ENCODE measurements at regions of chr17 and their contacts with region 1.

Region 1: DNA sequence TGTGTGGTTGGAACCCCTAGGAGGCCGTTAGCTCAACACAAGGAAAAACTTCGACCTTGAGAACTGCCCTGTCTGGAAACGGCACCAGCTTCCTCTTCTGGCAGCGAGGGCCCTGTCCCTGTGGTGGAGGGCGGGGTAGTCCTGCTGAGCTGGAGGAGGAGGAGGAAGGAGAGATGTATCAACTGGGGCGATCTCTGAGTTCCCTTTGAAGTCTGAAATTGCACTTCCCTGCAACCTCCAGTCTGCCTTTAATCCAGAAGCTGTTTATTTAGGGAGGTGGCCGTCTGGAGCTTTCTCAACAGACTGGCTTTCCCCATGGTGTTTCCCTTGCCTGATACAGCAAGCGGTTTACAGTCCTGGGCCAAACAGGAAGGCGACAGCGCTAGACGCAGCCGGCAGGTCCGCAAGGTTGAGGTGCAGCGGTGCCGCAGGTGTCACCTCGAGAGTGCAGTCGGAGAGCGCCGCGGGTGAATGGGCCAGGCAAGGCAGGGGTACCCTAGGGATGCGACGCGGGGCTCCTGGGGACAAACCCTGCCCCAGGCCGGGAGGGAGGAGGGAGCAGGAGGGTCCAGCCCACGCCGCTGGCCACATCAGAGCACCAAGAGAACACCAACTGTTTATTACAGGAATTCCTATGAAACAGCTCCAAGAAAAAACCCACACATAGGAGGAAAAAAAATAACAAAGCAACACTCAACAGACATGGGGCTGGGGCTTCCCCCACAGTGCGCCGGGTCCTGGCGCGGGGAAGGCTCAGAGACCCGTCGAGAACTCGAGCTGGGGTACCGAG is 11.4 kb upstream of the MRPS23 start:
- DNase-seq: peak; percentile 78 to 90
- ATAC-seq: peak; percentile 37 to 64
- H3K4me3 ChIP-seq: peak overlapping the region; percentile 40
- H3K27ac ChIP-seq: peak overlapping the region; percentile 92 to 95
- H3K4me1 ChIP-seq: peaks cover 73% of the 10 kb centered on the region
- CTCF ChIP-seq: no peak
- EP300 ChIP-seq: peak; percentile 68 to 88; a peak in 4 of 5 replicates
- POLR2A ChIP-seq: peak; percentile 24; the same call in 1 of the 2 replicates
- RAD21 ChIP-seq: peak; percentile 20 to 34; a peak in 1 of 5 replicates

Region 2: GRCh38 chr17:57875309-57876115 is 14.3 kb after region 1 on chr17:
- CTCF ChIA-PET with region 1: interaction called, 499 read pairs
- POLR2A ChIA-PET with region 1: interaction called, 25 read pairs
- DNase-seq: peak; percentile 96 to 98
- ATAC-seq: peak; percentile 83 to 88
- H3K4me3 ChIP-seq: peak overlapping the region; percentile 7; the same call in 1 of the 3 replicates
- H3K27ac ChIP-seq: peak overlapping the region; percentile 92 to 95
- H3K4me1 ChIP-seq: peaks cover 95% of the 10 kb centered on the region
- CTCF ChIP-seq: peak; percentile 54; the same call in 2 of the 3 replicates
- EP300 ChIP-seq: peak; percentile 73 to 92; a peak in 3 of 5 replicates
- POLR2A ChIP-seq: no peak
- RAD21 ChIP-seq: peak; percentile 72 to 86

Region 3: DNA sequence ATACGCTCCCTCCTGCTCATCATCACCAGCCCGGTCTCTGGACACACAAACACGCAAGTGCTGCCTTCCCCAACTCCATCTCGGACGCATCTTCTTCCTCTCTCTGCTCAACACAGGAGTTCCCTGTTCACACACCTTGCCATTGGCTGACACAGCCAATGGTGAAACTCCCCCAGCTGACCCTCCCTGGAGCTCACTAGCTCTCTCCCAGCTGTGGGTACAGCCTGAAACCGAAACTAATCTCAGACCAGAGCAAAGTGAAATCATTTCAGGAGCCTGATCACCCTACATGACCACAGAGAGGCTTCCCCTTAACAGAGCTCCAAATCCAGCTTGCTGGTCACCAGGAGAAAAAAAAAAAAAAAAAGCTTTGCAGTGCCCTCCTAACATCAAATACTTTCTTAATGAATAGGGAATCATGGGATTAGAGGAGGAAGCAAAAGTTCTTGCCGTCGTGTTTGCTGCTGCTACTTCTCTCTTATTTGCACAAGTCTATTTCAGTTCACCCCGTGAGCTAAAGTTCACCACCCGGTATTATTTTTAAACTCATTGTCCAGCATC is 85.7 kb after region 1 on chr17:
- CTCF ChIA-PET with region 1: interaction called, 227 read pairs
- POLR2A ChIA-PET with region 1: interaction called, 10 read pairs
- DNase-seq: peak; percentile 66 to 83
- ATAC-seq: peak; percentile 20 to 22; a peak in 4 of 6 replicates
- H3K4me3 ChIP-seq: peak overlapping the region; percentile 34
- H3K27ac ChIP-seq: peak overlapping the region; percentile 93 to 100
- H3K4me1 ChIP-seq: peaks cover 91% of the 10 kb centered on the region
- CTCF ChIP-seq: no peak
- EP300 ChIP-seq: no peak
- POLR2A ChIP-seq: no peak
- RAD21 ChIP-seq: no peak; a peak in 1 of 5 replicates

Region 4: DNA sequence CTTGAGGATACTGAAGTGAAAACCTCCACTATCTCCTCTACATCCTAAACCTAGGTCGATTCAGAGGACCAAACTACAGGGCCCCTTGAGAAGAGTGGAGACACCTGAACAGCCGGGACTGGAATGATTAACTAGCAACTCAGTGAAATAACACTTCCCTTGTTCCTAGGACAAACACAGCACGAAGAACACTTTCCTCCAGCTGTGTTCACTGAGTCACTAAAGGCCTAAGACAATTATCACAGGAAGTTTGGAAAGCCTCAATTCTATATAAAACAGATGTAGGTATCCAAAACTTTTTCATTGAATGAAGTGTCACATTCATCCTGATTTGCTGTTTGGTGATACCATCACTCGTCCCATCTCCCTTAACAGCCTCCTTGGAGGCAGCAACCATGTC is 109.5 kb after region 1 on chr17:
- CTCF ChIA-PET with region 1: interaction called, 36 read pairs
- POLR2A ChIA-PET with region 1: no interaction called
- DNase-seq: no peak
- ATAC-seq: peak in 1 of 2 experiments; percentile 9; a peak in 1 of 6 replicates
- H3K4me3 ChIP-seq: no peak overlapping the region
- H3K27ac ChIP-seq: peak overlapping the region in 1 of 2 experiments; percentile 50; a peak in 4 of 6 replicates
- H3K4me1 ChIP-seq: peaks cover 36% of the 10 kb centered on the region
- CTCF ChIP-seq: no peak
- EP300 ChIP-seq: no peak
- POLR2A ChIP-seq: no peak
- RAD21 ChIP-seq: no peak

Region 5: DNA sequence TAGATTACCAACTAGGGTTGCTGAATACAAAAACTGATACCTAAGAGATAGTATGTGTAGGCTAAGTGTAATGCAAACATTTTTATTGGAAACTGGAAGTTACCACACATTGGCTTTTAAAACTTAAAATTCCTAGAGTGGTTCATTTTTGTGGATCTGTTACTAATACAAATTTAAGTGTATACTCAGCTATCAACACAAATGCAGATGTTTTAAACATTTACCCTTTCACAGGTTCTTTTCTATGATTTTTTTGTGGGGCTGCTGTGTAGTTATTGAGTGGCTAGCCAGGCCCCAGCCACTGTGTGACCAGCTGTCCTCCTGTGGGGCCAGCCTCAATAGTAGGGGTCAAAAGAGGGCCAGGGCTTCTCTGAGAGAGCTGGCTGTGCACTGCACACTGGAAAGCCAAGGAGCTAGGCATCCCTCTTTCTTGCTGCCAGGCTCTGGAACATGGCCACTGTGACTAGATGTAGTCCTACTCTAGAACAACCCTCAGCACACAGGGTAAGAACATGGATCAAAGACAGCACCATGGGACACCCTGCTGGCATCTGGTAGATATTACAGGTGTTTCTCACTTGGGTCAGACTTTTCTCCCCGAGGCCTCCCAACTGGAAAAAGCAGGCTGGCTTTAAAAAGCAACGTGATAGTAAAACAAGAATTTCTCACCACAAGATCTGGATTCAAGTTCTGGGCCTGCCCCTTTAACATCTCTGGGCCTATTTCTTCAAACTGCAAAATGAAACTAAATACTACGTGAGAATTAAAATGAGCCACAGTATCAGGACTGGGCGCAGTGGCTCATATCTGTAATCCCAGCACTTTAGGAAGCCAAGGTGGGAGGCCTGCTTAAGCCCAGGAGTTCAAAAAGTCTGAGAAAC is 134.1 kb after region 1 on chr17:
- CTCF ChIA-PET with region 1: interaction called, 1,377 read pairs
- POLR2A ChIA-PET with region 1: interaction called, 44 read pairs
- DNase-seq: peak; percentile 87 to 95
- ATAC-seq: peak; percentile 84 to 88
- H3K4me3 ChIP-seq: no peak overlapping the region
- H3K27ac ChIP-seq: peak overlapping the region; percentile 50 to 76
- H3K4me1 ChIP-seq: peaks cover 63% of the 10 kb centered on the region
- CTCF ChIP-seq: peak; percentile 90
- EP300 ChIP-seq: no peak
- POLR2A ChIP-seq: no peak
- RAD21 ChIP-seq: peak; percentile 93 to 94

Measured in A549 (cell line).